ENCODE measurements at regions of chr5 and their contacts with region 1.

Region 1: GRCh38 chr5:87267574-87268125 is at the start of gene RASA1:
- DNase-seq: peak; percentile 95 to 97
- H3K4me3 ChIP-seq: peak within 1 kb of the TSS; percentile 62 to 92 (median 84)
- H3K27ac ChIP-seq: peak within 1 kb of the TSS; percentile 87 to 96 (median 94)
- H3K4me1 ChIP-seq: peaks cover 8 to 15% of the 10 kb centered on the region in 2 donors
- H3K27me3 ChIP-seq: no peaks in the 10 kb centered on the region
- CTCF ChIP-seq: no peak
- POLR2A ChIP-seq: peak; percentile 56 to 96
- total RNA-seq, gene RASA1: 45.2 to 57.1 (median 52.8) TPM

Region 2: DNA sequence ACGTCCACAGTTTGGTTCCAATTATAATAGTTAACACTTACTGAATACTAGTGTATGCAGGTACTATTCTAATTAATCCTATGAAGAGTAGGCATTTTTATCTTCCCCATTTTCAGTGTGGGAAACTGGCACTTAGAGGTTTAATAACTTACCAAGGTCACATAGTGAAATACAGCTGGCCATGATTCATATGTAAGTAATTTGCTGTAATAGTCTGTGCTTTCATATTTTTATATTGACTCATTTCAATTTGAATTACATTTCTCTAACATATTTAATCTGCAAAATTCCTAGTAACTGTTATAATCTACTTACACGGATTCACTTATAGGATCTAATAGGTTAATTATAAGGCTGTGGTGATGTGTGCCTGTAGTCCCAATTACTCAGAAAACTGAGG is 125.7 kb after region 1 on chr5:
- intact Hi-C with region 1: loop called (anchors 10 kb)
- DNase-seq: no peak
- H3K4me3 ChIP-seq: no peak overlapping the region
- H3K27ac ChIP-seq: no peak overlapping the region
- H3K4me1 ChIP-seq: peaks cover 0 to 5% of the 10 kb centered on the region in 2 donors
- H3K27me3 ChIP-seq: no peaks in the 10 kb centered on the region
- CTCF ChIP-seq: no peak
- POLR2A ChIP-seq: no peak

Region 3: DNA sequence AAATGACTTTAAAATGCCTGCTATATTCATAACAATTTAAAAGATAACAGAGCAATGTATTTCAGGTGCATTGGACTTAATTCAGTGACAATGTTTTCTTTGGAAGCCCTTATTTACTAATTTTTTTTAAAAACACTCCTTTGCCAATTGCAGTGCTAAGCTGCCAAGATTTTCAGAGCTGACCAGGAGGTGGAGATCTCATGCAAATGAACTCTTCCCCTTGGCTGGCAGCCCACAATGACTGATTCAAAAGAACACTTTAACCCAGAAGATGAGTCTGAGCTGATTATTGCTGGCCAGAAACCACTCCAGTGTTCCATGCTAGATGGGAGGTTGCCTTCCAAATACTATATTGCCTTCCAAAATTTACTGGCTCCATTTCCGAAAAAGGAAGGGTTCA is 273.4 kb after region 1 on chr5:
- intact Hi-C with region 1: no loop called
- DNase-seq: peak; percentile 56 to 73
- H3K4me3 ChIP-seq: no peak overlapping the region
- H3K27ac ChIP-seq: no peak overlapping the region
- H3K4me1 ChIP-seq: no peaks in the 10 kb centered on the region
- H3K27me3 ChIP-seq: no peaks in the 10 kb centered on the region
- CTCF ChIP-seq: peak in 2 of 6 experiments; percentile 5
- POLR2A ChIP-seq: no peak